ENCODE measurements at regions of chr17 and their contacts with region 1.

Region 1: GRCh38 chr17:1628856-1629646 is 417 bp upstream of the SLC43A2 start:
- DNase-seq: peak; percentile 97 to 99
- H3K4me3 ChIP-seq: peak overlapping the region; percentile 90
- H3K4me3 Mint-ChIP-seq: peak overlapping the region; percentile 95
- H3K27ac Mint-ChIP-seq: peak overlapping the region; percentile 95
- H3K4me1 ChIP-seq: peaks cover 31% of the 10 kb centered on the region
- H3K4me1 Mint-ChIP-seq: peaks cover 23% of the 10 kb centered on the region
- H3K27me3 ChIP-seq: no peaks in the 10 kb centered on the region
- H3K27me3 Mint-ChIP-seq: peaks cover 2% of the 10 kb centered on the region
- CTCF ChIP-seq: peak in 1 of 2 experiments; percentile 38

Region 2: DNA sequence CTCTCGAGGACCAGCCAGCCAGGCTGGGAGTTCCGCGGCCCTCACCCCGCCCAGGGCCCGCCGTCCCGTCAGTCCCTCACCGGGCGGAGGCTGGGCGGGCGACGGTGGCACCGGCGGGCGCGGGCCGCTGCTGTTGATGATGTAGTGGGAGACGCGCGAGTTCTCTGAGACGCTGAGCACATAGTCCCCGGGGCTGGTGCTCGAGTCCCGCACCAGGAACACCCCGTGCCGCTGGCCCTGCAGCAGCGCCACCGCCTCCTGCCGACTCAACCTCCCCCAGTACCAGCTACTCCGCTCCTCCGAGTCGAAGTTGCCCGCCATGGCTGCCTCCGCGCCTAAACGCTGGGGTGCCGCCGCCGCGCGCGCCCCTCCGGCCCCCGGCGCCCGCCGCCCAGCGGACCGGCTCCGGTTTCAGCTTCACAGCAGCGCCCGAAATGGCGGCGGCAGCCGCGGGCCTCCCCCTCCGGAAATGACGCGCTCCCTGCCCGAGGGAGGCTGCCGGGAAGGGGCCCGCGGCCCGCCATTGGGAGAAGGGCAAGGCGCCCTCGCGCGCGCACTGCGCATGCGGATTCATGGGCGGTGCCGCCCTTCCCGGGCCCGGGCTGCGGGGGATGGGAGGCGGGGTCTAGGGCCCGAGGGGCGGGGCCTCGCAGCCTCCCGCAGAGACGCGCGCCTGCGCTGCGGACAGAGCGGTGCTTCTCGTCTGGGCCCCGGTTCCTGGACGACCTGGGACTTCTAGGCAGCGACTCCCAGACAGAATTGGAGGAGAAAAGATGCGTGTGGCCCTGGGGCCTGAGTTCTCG is 173.1 kb before region 1 on chr17 and contains the start of gene CRK:
- CTCF ChIA-PET with region 1: no interaction called
- POLR2A ChIA-PET with region 1: no interaction called
- intact Hi-C with region 1: loop called (anchors 10 kb)
- DNase-seq: peak; percentile 96 to 99
- H3K4me3 ChIP-seq: peak within 1 kb of the TSS; percentile 99
- H3K4me3 Mint-ChIP-seq: peak within 1 kb of the TSS; percentile 93
- H3K27ac Mint-ChIP-seq: peak within 1 kb of the TSS; percentile 94
- H3K4me1 ChIP-seq: peaks cover 9% of the 10 kb centered on the region; the same call in 1 of the 2 replicates
- H3K4me1 Mint-ChIP-seq: peaks cover 13% of the 10 kb centered on the region
- H3K27me3 ChIP-seq: no peaks in the 10 kb centered on the region
- H3K27me3 Mint-ChIP-seq: no peaks in the 10 kb centered on the region
- CTCF ChIP-seq: no peak
- total RNA-seq, gene CRK: 70.0 and 72.3 TPM in 2 replicates

Region 3: GRCh38 chr17:1532836-1533602 is 96.0 kb before region 1 on chr17:
- CTCF ChIA-PET with region 1: interaction called, 11 read pairs
- POLR2A ChIA-PET with region 1: no interaction called
- intact Hi-C with region 1: no loop called
- DNase-seq: peak in 1 of 2 experiments; percentile 35
- H3K4me3 ChIP-seq: no peak overlapping the region
- H3K4me3 Mint-ChIP-seq: no peak overlapping the region
- H3K27ac Mint-ChIP-seq: no peak overlapping the region
- H3K4me1 ChIP-seq: no peaks in the 10 kb centered on the region
- H3K4me1 Mint-ChIP-seq: peaks cover 6% of the 10 kb centered on the region
- H3K27me3 ChIP-seq: no peaks in the 10 kb centered on the region
- H3K27me3 Mint-ChIP-seq: no peaks in the 10 kb centered on the region
- CTCF ChIP-seq: peak; percentile 26 to 40

Region 4: GRCh38 chr17:1573916-1574696 is 54.9 kb before region 1 on chr17:
- CTCF ChIA-PET with region 1: interaction called, 109 read pairs
- POLR2A ChIA-PET with region 1: interaction called, 3 read pairs
- intact Hi-C with region 1: loop called (anchors 1 kb)
- DNase-seq: peak; percentile 61 to 86
- H3K4me3 ChIP-seq: no peak overlapping the region
- H3K4me3 Mint-ChIP-seq: no peak overlapping the region
- H3K27ac Mint-ChIP-seq: no peak overlapping the region
- H3K4me1 ChIP-seq: no peaks in the 10 kb centered on the region
- H3K4me1 Mint-ChIP-seq: no peaks in the 10 kb centered on the region
- H3K27me3 ChIP-seq: no peaks in the 10 kb centered on the region
- H3K27me3 Mint-ChIP-seq: no peaks in the 10 kb centered on the region
- CTCF ChIP-seq: peak; percentile 82 to 83

Region 5: DNA sequence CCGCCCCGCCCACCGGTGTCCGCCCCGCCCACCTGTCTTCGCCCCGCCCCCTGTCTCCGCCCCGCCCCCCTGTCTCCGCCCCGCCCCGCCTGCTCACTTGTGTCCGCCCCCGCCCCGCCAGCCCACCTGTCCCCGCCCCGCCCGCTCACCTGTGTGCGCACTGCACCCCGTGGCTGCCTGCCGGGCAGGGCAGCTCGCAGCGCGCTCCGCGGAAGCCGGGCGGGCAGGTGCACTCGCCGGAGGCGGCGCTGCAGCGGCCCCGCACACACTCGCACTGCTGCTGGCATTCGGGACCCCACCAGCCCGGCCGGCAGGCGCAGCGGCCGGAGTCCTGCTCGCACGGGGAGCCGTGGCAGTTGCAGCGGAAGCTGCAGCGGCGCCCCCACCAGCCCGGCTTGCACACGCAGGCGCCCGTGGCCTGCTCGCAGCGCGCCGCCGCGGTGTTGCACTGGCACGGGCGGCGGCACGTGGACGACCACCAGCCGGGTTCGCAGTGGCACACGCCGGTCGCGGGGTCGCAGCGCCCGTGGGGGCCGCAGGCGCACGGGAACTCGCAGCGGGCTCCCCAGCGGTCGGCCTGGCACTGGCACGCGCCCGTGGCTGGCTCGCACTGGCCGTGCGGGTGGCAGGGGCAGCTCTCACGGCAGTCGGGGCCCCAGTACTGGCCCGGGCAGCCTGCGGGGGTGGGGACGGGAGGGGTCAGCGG is 14.4 kb after region 1 on chr17:
- CTCF ChIA-PET with region 1: interaction called, 12 read pairs
- POLR2A ChIA-PET with region 1: interaction called, 5 read pairs
- intact Hi-C with region 1: loop called (anchors 1 kb)
- DNase-seq: peak; percentile 91 to 92
- H3K4me3 ChIP-seq: peak overlapping the region; percentile 60
- H3K4me3 Mint-ChIP-seq: peak overlapping the region; percentile 79
- H3K27ac Mint-ChIP-seq: peak overlapping the region; percentile 10
- H3K4me1 ChIP-seq: peaks cover 13% of the 10 kb centered on the region; the same call in 1 of the 2 replicates
- H3K4me1 Mint-ChIP-seq: no peaks in the 10 kb centered on the region
- H3K27me3 ChIP-seq: no peaks in the 10 kb centered on the region
- H3K27me3 Mint-ChIP-seq: no peaks in the 10 kb centered on the region
- CTCF ChIP-seq: peak; percentile 23 to 49

Region 6: GRCh38 chr17:1703063-1703462 is 74.0 kb after region 1 on chr17:
- CTCF ChIA-PET with region 1: no interaction called
- POLR2A ChIA-PET with region 1: no interaction called
- intact Hi-C with region 1: no loop called
- DNase-seq: no peak
- H3K4me3 ChIP-seq: no peak overlapping the region
- H3K4me3 Mint-ChIP-seq: no peak overlapping the region
- H3K27ac Mint-ChIP-seq: no peak overlapping the region
- H3K4me1 ChIP-seq: no peaks in the 10 kb centered on the region
- H3K4me1 Mint-ChIP-seq: peaks cover 6% of the 10 kb centered on the region
- H3K27me3 ChIP-seq: no peaks in the 10 kb centered on the region
- H3K27me3 Mint-ChIP-seq: no peaks in the 10 kb centered on the region
- CTCF ChIP-seq: no peak